Gastrocnemius medialis (tissue), 4 donors: ENCODE measurements at regions of chr7 and their contacts with region 1.

Region 1: GRCh38 chr7:142711746-142712619 is 37.3 kb upstream of the PRSS1 start:
- DNase-seq: no peak
- ATAC-seq: no peak
- H3K4me3 ChIP-seq: no peak overlapping the region
- H3K27ac ChIP-seq: no peak overlapping the region
- H3K4me1 ChIP-seq: peaks cover 7 to 8% of the 10 kb centered on the region in 2 donors
- H3K27me3 ChIP-seq: no peaks in the 10 kb centered on the region
- CTCF ChIP-seq: peak; percentile 35 to 61 (median 41)
- POLR2A ChIP-seq: no peak

Region 2: GRCh38 chr7:142152076-142152475 is 559.9 kb before region 1 on chr7:
- in situ Hi-C with region 1: no loop called
- intact Hi-C with region 1: no loop called
- DNase-seq: no peak
- ATAC-seq: no peak
- H3K4me3 ChIP-seq: no peak overlapping the region
- H3K27ac ChIP-seq: no peak overlapping the region
- H3K4me1 ChIP-seq: no peaks in the 10 kb centered on the region
- H3K27me3 ChIP-seq: no peaks in the 10 kb centered on the region
- CTCF ChIP-seq: no peak
- POLR2A ChIP-seq: no peak

Region 3: DNA sequence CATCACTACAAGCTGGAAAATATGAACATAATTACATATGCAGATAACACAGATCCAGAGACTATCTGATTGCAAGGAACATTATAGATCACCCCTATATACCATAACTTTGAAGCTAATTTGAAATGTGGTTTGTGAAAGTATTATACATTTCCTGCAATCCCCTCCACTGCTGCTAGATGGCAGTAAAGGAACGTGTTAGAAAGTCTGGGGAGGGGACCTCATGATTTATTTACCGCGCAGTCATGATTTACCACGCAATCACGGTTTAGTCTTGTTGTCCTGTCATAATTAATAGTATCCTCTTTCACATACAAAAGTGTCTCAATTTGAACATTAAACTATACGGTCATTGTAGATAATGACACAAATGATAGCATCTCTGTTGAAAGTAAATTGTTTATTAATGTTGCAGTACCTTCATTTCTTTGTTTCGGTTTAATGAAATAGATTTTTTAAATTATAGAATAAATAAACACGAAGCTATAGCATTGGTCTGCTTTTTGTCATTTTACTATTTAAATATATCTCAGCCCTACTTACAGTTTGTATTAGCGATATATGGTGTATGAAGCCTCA is 108.0 kb before region 1 on chr7:
- in situ Hi-C with region 1: no loop called
- intact Hi-C with region 1: loop called (anchors 2 kb)
- DNase-seq: peak; percentile 32 to 38
- ATAC-seq: peak; percentile 38 to 75
- H3K4me3 ChIP-seq: peak overlapping the region in 3 of 4 donors; percentile 12 to 36 (median 14)
- H3K27ac ChIP-seq: peak overlapping the region in 2 of 4 donors; percentile 2 to 20
- H3K4me1 ChIP-seq: peaks cover 6 to 11% of the 10 kb centered on the region in 2 donors
- H3K27me3 ChIP-seq: no peaks in the 10 kb centered on the region
- CTCF ChIP-seq: peak; percentile 71 to 89 (median 86)
- POLR2A ChIP-seq: no peak